Endothelial cell of umbilical vein (primary cell): ENCODE measurements at regions of chr10 and their contacts with region 1.

Region 1: DNA sequence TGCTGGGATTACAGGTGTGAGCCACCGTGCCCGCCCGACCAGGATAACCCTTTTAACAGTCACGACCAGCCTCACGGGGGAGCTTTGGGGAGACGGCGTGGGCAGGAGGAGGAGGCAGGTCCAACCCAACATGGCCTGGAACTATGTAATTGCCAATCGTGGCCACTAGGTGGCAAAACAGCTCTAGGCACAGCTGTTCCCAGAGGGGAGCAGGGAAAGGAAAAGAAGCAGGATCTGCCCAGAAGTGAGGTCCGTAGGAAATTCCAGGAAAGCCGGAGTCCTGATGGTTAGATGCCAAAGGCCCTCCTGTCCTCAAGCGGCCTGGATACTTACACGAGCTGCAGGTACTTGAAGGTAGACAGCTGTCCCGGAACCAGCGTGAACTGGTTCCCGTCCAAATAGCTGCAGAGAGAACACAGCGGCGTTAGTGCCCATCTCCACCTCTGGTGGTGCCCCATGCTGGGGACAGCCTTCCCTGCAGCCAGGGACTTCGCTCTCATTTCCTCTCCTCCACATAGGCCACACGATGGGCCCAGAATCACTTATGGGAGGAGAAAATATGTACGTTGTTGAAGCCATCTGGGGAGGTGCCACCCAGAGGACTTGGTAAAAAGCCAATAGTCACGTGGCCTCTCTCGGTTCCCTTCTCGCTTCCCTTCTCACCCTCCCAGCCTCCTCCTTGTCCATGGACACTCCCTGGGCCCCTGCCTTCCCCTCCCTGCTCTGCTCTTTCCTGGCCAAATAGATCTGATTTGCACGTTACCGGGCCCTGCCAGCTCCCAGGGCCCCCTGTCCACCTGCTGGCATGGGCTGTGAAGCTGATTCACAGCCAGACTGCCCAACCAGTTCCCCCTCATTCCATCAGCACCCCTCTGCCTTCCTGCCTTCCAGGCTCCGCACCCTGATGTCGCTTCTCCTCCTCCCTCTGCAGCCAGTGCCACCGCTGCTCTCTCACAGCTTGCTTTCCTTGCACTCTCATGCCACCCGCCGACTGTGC is 148.1 kb downstream of the SLIT1 start:
- DNase-seq: peak; percentile 82
- H3K4me3 ChIP-seq: peak overlapping the region in 2 of 3 experiments; percentile 20 to 35
- H3K27ac ChIP-seq: no peak overlapping the region
- H3K4me1 ChIP-seq: peaks cover 5% of the 10 kb centered on the region
- H3K27me3 ChIP-seq: peaks cover 0 to 2% of the 10 kb centered on the region in 2 experiments
- CTCF ChIP-seq: peak; percentile 81 to 87
- POLR2A ChIP-seq: no peak

Region 2: GRCh38 chr10:96772194-96772593 is 265.5 kb before region 1 on chr10:
- CTCF ChIA-PET with region 1: no interaction called
- POLR2A ChIA-PET with region 1: no interaction called
- dilution Hi-C with region 1: no loop called
- intact Hi-C with region 1: no loop called
- DNase-seq: no peak
- H3K4me3 ChIP-seq: no peak overlapping the region
- H3K27ac ChIP-seq: no peak overlapping the region
- H3K4me1 ChIP-seq: no peaks in the 10 kb centered on the region
- H3K27me3 ChIP-seq: no peaks in the 10 kb centered on the region
- CTCF ChIP-seq: no peak
- POLR2A ChIP-seq: no peak

Region 3: DNA sequence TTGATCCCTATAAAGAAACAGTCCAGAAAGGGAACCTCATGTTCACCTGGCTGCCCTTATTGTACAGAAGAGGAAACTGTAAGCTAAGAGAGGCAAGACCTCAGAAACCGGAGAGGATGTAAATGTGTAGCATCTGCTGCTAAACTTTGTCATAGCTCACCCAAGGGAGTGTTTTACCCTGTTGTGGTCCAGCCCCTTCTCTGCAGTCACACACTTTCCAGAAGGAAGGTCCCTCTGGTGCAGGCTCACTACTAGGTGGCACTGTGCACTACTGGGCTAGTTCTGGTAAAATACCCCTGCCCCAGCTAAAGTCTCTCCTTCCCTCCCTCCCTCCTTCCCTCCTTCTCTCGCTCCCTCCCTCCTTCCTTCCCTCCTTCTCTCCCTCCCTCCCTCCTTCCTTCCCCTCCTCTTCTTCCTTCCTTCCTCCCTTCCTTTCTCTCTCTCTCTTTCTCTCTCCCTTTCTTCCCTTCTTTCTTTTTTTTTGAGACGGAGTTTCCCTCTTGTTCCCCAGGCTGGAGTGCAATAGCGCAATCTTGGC is 248.0 kb before region 1 on chr10:
- CTCF ChIA-PET with region 1: no interaction called
- POLR2A ChIA-PET with region 1: no interaction called
- dilution Hi-C with region 1: no loop called
- intact Hi-C with region 1: loop called (anchors 5 kb)
- DNase-seq: peak; percentile 14
- H3K4me3 ChIP-seq: no peak overlapping the region
- H3K27ac ChIP-seq: no peak overlapping the region
- H3K4me1 ChIP-seq: no peaks in the 10 kb centered on the region
- H3K27me3 ChIP-seq: peaks cover 0 to 2% of the 10 kb centered on the region in 2 experiments
- CTCF ChIP-seq: peak in 1 of 2 donors; percentile 81
- POLR2A ChIP-seq: no peak

Region 4: GRCh38 chr10:96995851-96996250 is 41.8 kb before region 1 on chr10:
- CTCF ChIA-PET with region 1: interaction called, 10 read pairs
- POLR2A ChIA-PET with region 1: no interaction called
- dilution Hi-C with region 1: no loop called
- intact Hi-C with region 1: no loop called
- DNase-seq: peak; percentile 55
- H3K4me3 ChIP-seq: no peak overlapping the region
- H3K27ac ChIP-seq: no peak overlapping the region
- H3K4me1 ChIP-seq: no peaks in the 10 kb centered on the region
- H3K27me3 ChIP-seq: no peaks in the 10 kb centered on the region
- CTCF ChIP-seq: no peak
- POLR2A ChIP-seq: no peak

Region 5: DNA sequence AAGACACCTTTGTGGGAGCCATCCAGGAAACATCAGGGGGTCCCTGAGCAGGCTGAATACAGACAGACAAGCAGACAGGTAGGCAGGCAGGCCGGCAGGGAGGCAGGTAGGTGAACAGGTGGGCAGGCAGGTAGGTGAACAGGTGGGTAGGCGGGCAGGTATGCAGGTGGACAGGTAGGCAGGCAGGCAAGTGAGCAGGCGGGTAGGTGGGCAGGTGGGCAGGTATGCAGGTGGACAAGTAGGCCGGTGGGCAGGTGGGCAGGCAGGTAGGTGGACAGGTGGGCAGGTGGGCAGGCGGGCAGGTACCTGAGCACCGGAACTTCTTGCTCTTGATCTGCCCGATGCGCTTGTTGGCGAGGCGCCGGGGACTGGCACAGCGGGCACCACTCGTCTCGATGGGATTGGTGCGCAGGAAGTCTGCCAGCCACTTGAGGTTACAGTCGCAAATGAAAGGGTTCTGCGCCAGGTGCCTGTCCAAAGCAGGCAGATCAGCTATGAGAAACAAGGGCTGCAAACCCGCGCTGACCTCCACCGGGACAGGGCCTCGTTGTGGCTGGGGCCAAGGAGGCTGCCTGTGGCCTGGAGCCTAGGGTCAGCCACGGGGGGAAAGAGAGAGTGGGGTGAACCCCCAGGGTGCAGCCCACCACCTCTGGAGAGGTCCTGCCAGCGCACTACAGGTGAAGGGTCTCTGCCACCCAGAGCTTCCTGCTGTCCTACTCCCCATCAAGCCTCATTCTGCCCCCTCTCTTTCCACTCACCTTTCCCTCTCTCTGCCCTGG is 11.2 kb after region 1 on chr10:
- CTCF ChIA-PET with region 1: interaction called, 24 read pairs
- POLR2A ChIA-PET with region 1: no interaction called
- dilution Hi-C with region 1: no loop called
- intact Hi-C with region 1: no loop called
- DNase-seq: no peak
- H3K4me3 ChIP-seq: no peak overlapping the region
- H3K27ac ChIP-seq: no peak overlapping the region
- H3K4me1 ChIP-seq: no peaks in the 10 kb centered on the region
- H3K27me3 ChIP-seq: peaks cover 0 to 2% of the 10 kb centered on the region in 2 experiments
- CTCF ChIP-seq: no peak
- POLR2A ChIP-seq: no peak

Region 6: DNA sequence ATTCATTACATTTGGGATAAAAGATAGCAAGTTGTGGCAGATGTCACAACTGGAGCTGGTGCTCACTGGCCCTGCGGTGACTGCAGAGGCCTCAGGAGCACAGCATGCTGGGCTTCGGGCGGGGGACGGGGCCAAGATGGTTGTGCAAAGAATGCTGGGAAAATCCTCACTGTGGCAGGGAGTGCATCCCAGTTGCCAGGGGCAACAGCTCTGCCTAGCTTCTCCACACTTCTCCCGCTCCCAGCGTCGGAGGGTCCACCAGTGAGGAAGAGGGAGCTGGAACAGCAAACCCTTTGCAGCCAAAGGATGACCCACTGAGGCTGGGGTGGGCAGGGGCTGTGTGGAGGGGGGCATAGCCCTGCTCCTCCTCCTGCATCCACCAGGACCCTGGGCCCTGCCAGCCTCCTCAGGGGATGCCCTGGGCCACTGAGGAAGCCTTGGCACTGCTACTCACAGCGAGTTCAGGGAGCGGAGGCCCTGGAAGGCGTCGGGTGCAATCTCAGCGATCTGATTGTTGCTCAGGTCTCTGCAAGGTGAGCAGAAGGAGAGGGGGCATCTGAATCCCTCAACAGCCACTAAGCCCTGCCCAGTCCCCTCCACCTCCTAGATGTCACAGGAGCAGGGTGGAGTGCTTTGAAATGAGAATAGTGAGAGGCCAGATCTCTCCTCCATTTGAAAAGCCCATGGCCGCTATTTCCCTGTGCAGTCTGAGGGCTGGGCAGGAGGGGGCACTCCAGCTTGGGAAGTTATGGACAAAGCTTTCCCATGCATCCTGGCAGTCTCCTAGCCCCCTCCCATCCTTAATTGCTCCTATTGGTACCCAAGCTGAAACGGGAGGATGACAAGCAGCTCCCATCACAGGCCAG is 21.6 kb after region 1 on chr10:
- CTCF ChIA-PET with region 1: interaction called, 24 read pairs
- POLR2A ChIA-PET with region 1: no interaction called
- dilution Hi-C with region 1: no loop called
- intact Hi-C with region 1: no loop called
- DNase-seq: no peak
- H3K4me3 ChIP-seq: no peak overlapping the region
- H3K27ac ChIP-seq: no peak overlapping the region
- H3K4me1 ChIP-seq: no peaks in the 10 kb centered on the region
- H3K27me3 ChIP-seq: peaks cover 0 to 1% of the 10 kb centered on the region in 2 experiments
- CTCF ChIP-seq: no peak
- POLR2A ChIP-seq: no peak

Region 7: GRCh38 chr10:97196223-97197029 is 158.8 kb after region 1 on chr10:
- CTCF ChIA-PET with region 1: interaction called, 12 read pairs
- POLR2A ChIA-PET with region 1: no interaction called
- dilution Hi-C with region 1: no loop called
- intact Hi-C with region 1: no loop called
- DNase-seq: peak; percentile 48
- H3K4me3 ChIP-seq: peak overlapping the region; percentile 39 to 55 (median 40)
- H3K27ac ChIP-seq: no peak overlapping the region
- H3K4me1 ChIP-seq: no peaks in the 10 kb centered on the region
- H3K27me3 ChIP-seq: peaks cover 15 to 17% of the 10 kb centered on the region in 2 experiments
- CTCF ChIP-seq: peak; percentile 80 to 84
- POLR2A ChIP-seq: no peak

Region 8: GRCh38 chr10:97234400-97234799 is 196.7 kb after region 1 on chr10:
- CTCF ChIA-PET with region 1: interaction called, 17 read pairs
- POLR2A ChIA-PET with region 1: no interaction called
- dilution Hi-C with region 1: no loop called
- intact Hi-C with region 1: no loop called
- DNase-seq: peak; percentile 62
- H3K4me3 ChIP-seq: no peak overlapping the region
- H3K27ac ChIP-seq: no peak overlapping the region
- H3K4me1 ChIP-seq: no peaks in the 10 kb centered on the region
- H3K27me3 ChIP-seq: no peaks in the 10 kb centered on the region
- CTCF ChIP-seq: peak; percentile 43 to 50
- POLR2A ChIP-seq: no peak